Endothelial cell of umbilical vein (primary cell): ENCODE measurements at regions of chr12 and their contacts with region 1.

Region 1: GRCh38 chr12:67355578-67356379 is 86.6 kb downstream of the CAND1 start:
- DNase-seq: peak; percentile 62
- H3K4me3 ChIP-seq: no peak overlapping the region
- H3K27ac ChIP-seq: no peak overlapping the region
- H3K4me1 ChIP-seq: no peaks in the 10 kb centered on the region
- H3K27me3 ChIP-seq: peaks cover 0 to 3% of the 10 kb centered on the region in 2 experiments
- CTCF ChIP-seq: peak; percentile 31 to 43
- POLR2A ChIP-seq: no peak

Region 2: GRCh38 chr12:67370979-67371378 is 15.2 kb after region 1 on chr12:
- CTCF ChIA-PET with region 1: interaction called, 17 read pairs
- POLR2A ChIA-PET with region 1: no interaction called
- dilution Hi-C with region 1: no loop called
- intact Hi-C with region 1: no loop called
- DNase-seq: no peak
- H3K4me3 ChIP-seq: no peak overlapping the region
- H3K27ac ChIP-seq: no peak overlapping the region
- H3K4me1 ChIP-seq: no peaks in the 10 kb centered on the region
- H3K27me3 ChIP-seq: no peaks in the 10 kb centered on the region
- CTCF ChIP-seq: no peak
- POLR2A ChIP-seq: no peak

Region 3: GRCh38 chr12:67441736-67442346 is 86.1 kb after region 1 on chr12:
- CTCF ChIA-PET with region 1: interaction called, 9 read pairs
- POLR2A ChIA-PET with region 1: no interaction called
- dilution Hi-C with region 1: no loop called
- intact Hi-C with region 1: loop called (anchors 1 kb)
- DNase-seq: peak; percentile 47
- H3K4me3 ChIP-seq: no peak overlapping the region
- H3K27ac ChIP-seq: no peak overlapping the region
- H3K4me1 ChIP-seq: no peaks in the 10 kb centered on the region
- H3K27me3 ChIP-seq: no peaks in the 10 kb centered on the region
- CTCF ChIP-seq: peak; percentile 68 to 69
- POLR2A ChIP-seq: no peak

Region 4: GRCh38 chr12:68040450-68041075 is 684.8 kb after region 1 on chr12:
- CTCF ChIA-PET with region 1: interaction called, 23 read pairs
- POLR2A ChIA-PET with region 1: no interaction called
- dilution Hi-C with region 1: no loop called
- intact Hi-C with region 1: loop called (anchors 5 kb)
- DNase-seq: peak; percentile 70
- H3K4me3 ChIP-seq: no peak overlapping the region
- H3K27ac ChIP-seq: no peak overlapping the region
- H3K4me1 ChIP-seq: no peaks in the 10 kb centered on the region
- H3K27me3 ChIP-seq: no peaks in the 10 kb centered on the region
- CTCF ChIP-seq: peak; percentile 70 to 86
- POLR2A ChIP-seq: no peak

Region 5: DNA sequence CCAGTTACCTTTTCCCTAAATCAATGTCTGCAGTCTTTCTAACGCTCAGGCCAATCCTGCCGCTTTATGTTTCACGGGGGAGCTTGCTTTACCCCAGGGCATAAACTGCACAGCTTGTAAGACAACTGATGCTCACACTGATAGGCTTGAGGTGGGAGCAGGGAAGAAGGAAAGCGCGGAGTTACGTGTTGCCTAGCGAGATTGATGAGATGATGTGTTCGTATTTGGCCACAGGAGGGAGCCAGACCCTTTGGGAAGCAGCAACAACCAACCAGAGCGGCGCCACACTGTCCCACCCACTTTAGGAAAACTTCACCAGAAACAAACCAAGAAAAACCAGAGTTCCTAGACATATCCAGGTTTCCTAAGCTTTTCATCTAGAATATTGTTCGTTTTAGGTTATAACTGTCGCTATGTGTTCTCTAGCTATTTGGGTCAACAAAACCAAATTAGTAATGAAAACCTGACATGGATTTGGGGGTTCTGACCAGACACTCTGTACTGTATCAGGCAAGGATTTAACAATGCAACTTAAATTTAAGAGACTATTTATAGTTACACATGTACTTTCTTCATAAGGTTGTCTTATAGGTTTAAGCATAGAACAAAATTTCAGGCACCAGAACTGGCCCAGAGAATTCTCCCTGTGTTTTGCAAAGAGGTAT is 867.4 kb after region 1 on chr12:
- CTCF ChIA-PET with region 1: interaction called, 6 read pairs
- POLR2A ChIA-PET with region 1: no interaction called
- dilution Hi-C with region 1: no loop called
- intact Hi-C with region 1: loop called (anchors 2 kb)
- DNase-seq: peak; percentile 88
- H3K4me3 ChIP-seq: no peak overlapping the region
- H3K27ac ChIP-seq: no peak overlapping the region
- H3K4me1 ChIP-seq: peaks cover 6% of the 10 kb centered on the region
- H3K27me3 ChIP-seq: peaks cover 0 to 2% of the 10 kb centered on the region in 2 experiments
- CTCF ChIP-seq: peak; percentile 84 to 86
- POLR2A ChIP-seq: no peak